ENCODE measurements at regions of chr11 and their contacts with region 1.

Region 1: DNA sequence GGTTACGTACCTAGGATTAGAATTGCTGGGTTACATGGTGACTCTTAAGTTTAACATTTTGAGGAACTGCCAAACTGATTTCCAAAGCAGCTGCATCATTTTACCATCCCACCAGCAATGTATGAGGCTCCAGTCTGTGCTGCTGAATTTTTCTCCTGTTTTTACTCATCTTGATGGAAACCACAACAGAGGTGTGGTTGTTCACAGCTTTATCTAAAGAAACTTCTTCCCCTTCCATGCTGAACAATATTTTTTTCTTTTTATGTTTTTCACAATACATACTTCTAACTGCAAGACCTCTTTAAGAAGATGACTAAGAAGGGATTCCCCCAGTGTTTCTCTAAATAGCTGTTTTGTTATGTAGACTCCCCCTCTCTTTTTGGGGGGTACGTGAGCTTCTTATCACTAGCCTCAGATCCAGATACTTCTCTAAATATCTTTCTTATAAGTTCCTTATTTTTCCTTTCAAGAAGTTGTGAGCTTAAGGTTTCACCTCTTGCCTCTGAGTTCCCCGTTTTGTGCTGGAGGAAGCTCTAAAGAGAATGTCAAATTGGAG is 24.0 kb downstream of the TCP11L1 start:
- DNase-seq: no peak

Region 2: GRCh38 chr11:32968541-32968940 is 94.9 kb before region 1 on chr11:
- in situ Hi-C with region 1: loop called (anchors 5 kb)
- DNase-seq: no peak

Region 3: GRCh38 chr11:33094157-33094556 is 30.8 kb after region 1 on chr11:
- in situ Hi-C with region 1: no loop called
- DNase-seq: no peak

Region 4: DNA sequence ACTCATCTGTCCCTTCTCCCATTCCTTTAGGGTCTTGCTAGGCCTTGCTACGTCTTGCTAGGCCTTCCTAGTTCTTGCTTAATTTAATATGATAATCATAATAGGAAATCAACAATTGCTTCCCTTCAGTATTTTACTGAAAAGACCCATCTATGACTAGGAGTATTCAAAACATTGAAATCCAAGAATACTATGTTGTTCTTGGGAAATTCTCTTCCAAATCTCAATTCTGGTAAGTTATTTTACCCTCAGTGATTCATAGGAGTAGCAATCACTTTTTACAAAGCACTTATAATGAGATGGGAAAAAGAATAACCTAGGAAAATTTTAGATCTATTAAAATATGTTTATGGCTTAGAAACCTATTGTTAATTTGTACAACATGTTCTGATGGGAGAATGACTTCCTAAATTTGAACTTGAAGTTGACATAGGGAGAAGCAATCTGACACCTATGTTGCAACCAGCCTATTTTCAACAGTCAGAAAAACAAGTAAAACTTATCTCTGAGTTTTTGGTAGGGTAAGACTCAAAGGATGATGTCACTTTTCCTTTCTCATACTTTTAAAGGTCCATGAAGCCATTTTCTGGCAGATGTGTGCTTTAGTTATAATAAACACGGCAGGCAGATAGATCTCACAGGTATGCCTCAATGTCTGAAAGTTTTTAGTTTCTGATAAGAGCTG is 164.3 kb after region 1 on chr11:
- in situ Hi-C with region 1: no loop called
- DNase-seq: no peak

Measured in G401 (cell line).